ENCODE measurements at regions of chr6 and their contacts with region 1.

Region 1: DNA sequence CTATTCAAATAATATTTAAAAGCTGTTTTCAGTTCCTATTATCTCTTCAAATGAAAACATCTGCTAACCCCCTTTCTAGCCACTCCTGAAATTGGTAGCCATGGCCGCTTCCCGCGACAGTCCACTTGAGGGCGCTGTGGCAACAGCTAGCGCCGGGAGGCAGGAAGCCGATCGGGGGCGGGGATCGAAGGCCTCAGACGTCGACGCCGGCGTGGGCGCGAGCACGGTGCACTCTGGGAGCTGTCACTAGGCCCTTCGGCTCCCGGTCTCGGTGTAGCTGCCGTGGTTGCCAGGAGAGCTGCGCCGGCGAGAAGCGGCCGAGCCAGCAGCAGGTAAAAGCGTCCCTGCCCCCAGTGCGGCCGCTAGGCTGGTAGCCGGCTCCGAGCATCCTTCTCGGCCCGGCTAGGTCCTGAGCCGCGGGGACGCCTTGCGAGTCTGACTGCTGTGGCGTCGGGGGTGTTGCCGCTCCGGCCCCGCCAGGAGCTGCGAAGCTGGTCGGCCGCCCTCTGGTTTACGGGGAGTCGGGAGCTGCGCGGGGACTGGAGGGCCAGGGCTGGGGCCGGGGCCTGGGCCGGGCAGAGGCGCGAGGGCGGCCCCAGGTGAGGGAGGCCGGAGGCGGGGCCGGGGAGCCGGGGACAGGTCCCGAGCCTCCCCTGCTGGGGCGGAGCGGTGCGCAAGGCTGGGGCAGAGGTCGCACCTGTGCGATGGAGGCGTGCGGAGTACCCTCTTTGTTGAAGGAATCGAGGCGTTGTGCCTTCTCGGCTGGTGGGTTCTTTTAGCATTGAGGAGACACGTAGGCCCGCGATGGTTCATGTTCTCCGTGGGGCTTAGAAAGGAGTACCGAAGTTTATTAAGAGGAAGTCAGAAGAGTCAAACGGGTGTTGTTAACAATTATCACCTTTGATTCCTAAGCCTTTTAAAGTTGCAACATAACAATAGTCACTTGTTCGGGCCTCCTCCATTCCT is at the start of gene DOP1A:
- DNase-seq: peak; percentile 95 to 98 (median 97)
- ATAC-seq: peak; percentile 89 to 94 (median 94)
- H3K4me3 ChIP-seq: peak within 1 kb of the TSS; percentile 63 to 85 (median 74)
- H3K27ac ChIP-seq: peak within 1 kb of the TSS; percentile 77 to 92 (median 88)
- H3K4me1 ChIP-seq: peaks cover 10 to 50% (median 42%) of the 10 kb centered on the region in 3 donors
- H3K27me3 ChIP-seq: no peaks in the 10 kb centered on the region
- CTCF ChIP-seq: peak; percentile 92 to 99 (median 96)
- total RNA-seq, gene DOP1A: 8.3 to 16.1 (median 10.5) TPM

Region 2: DNA sequence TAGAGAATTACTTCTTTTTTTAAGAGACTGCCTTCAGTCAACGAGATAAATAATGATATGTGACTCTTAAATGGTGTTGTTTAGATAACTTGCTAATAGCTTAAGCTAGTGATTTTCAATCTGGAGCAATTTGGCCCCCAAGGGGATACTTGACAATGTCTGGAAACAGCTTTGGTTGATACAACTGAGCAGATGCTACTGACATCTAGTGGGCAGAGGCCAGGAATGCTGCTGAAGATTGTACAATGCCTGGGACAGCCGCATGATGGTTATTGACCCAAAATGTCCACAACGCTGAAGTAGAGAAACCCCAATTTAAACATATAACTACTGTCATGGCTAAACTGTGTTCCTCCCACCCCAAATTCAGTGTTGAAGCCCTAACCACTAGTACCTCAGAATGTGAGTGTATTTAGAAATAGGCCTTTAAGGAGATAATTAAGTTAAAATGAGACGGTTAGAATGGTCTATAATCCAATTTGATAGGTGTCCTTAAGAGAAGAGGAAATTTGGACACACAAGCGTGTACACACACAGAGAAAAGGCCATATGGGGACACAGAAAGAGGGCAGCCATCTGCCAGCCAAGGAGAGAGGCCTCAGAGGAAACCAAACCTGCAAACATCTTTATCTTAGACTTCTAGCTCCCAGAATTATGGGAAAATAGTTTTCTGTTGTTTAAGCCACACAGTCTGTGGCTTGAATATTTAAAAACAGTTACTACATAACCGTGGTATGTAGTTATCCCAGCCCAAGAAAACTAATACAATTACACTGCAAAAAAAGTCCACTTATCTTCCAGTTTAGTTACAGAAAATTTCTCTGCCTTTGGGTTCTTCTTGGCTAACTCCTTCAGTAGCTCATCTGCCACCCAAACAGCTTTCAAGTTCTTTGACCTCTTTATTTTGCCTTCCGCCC is 147.7 kb after region 1 on chr6:
- intact Hi-C with region 1: loop called in 1 of 3 experiments (anchors 10 kb)
- DNase-seq: peak in 4 of 6 donors; percentile 42 to 68 (median 46)
- ATAC-seq: peak; percentile 67 to 99 (median 97)
- H3K4me3 ChIP-seq: no peak overlapping the region
- H3K27ac ChIP-seq: no peak overlapping the region
- H3K4me1 ChIP-seq: no peaks in the 10 kb centered on the region
- H3K27me3 ChIP-seq: no peaks in the 10 kb centered on the region
- CTCF ChIP-seq: peak; percentile 24 to 66 (median 54)